Tibial artery (tissue), 4 donors: ENCODE measurements at regions of chr15 and their contacts with region 1.

Region 1: GRCh38 chr15:49718234-49718633 is 97.4 kb downstream of the DTWD1 start:
- DNase-seq: no peak
- H3K4me3 ChIP-seq: no peak overlapping the region
- H3K27ac ChIP-seq: peak overlapping the region; percentile 51 to 64
- H3K4me1 ChIP-seq: peaks cover 0 to 17% (median 9%) of the 10 kb centered on the region in 4 donors
- H3K27me3 ChIP-seq: no peaks in the 10 kb centered on the region
- CTCF ChIP-seq: no peak

Region 2: DNA sequence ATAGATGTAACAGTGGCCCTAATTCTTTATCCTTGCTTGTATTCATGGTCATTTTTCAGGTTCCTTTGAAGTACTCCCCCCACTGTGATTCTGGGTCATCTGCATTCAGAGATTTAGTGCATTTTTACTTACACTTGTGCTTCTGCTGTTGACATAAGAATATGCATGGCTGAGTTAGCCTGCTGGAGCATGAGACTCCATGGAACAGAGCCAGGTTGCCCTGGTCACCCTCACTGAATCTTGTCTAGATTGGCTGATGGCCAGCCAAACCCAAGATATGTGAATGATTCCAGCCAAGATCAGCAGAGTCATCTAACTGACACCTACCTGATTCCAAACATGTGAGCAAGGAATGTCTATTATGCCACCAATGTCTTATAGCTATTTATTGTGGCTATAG is 72.3 kb before region 1 on chr15:
- intact Hi-C with region 1: loop called (anchors 10 kb)
- DNase-seq: peak; percentile 26 to 65
- H3K4me3 ChIP-seq: no peak overlapping the region
- H3K27ac ChIP-seq: peak overlapping the region; percentile 57
- H3K4me1 ChIP-seq: peaks cover 0 to 29% (median 19%) of the 10 kb centered on the region in 4 donors
- H3K27me3 ChIP-seq: no peaks in the 10 kb centered on the region
- CTCF ChIP-seq: no peak

Region 3: GRCh38 chr15:49669288-49669687 is 48.9 kb before region 1 on chr15:
- intact Hi-C with region 1: no loop called
- DNase-seq: no peak
- H3K4me3 ChIP-seq: no peak overlapping the region
- H3K27ac ChIP-seq: no peak overlapping the region
- H3K4me1 ChIP-seq: peaks cover 0 to 8% (median 0%) of the 10 kb centered on the region in 4 donors
- H3K27me3 ChIP-seq: no peaks in the 10 kb centered on the region
- CTCF ChIP-seq: no peak

Region 4: DNA sequence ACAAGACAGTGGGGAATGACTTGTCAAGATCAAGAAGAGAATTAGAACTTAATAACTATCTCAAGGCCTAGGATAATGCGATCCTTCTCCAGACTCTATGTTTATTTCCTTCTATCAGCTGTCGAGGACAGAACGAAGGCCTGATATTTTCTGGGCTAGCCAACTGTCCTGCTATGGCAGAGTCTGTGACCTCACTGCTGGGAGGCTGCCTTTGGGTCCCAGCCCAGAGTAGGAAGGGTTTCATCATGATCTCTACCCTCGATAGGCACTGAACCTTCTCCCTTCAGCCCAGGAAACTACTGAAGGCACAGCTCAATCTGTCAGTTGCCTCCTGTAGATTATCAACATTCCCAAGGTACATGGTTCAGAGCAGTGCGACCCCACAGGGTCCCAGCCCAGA is 163.6 kb after region 1 on chr15:
- intact Hi-C with region 1: loop called (anchors 5 kb)
- DNase-seq: no peak
- H3K4me3 ChIP-seq: no peak overlapping the region
- H3K27ac ChIP-seq: no peak overlapping the region
- H3K4me1 ChIP-seq: peaks cover 7 to 27% (median 17%) of the 10 kb centered on the region in 4 donors
- H3K27me3 ChIP-seq: no peaks in the 10 kb centered on the region
- CTCF ChIP-seq: no peak